ENCODE measurements at regions of chr11 and their contacts with region 1.

Region 1: GRCh38 chr11:128290106-128290840 is 297.1 kb downstream of the ETS1 start:
- DNase-seq: peak; percentile 80
- H3K4me3 Mint-ChIP-seq: peak overlapping the region; percentile 81
- H3K27ac Mint-ChIP-seq: peak overlapping the region; percentile 96
- H3K4me1 Mint-ChIP-seq: peaks cover 97% of the 10 kb centered on the region
- H3K27me3 Mint-ChIP-seq: no peaks in the 10 kb centered on the region

Region 2: GRCh38 chr11:127816962-127817361 is 473.3 kb before region 1 on chr11:
- CTCF ChIA-PET with region 1: no interaction called
- POLR2A ChIA-PET with region 1: no interaction called
- intact Hi-C with region 1: no loop called
- DNase-seq: no peak
- H3K4me3 Mint-ChIP-seq: no peak overlapping the region
- H3K27ac Mint-ChIP-seq: no peak overlapping the region
- H3K4me1 Mint-ChIP-seq: no peaks in the 10 kb centered on the region
- H3K27me3 Mint-ChIP-seq: peaks cover 7% of the 10 kb centered on the region

Region 3: GRCh38 chr11:128172046-128172878 is 118.0 kb before region 1 on chr11:
- CTCF ChIA-PET with region 1: interaction called, 29 read pairs
- POLR2A ChIA-PET with region 1: no interaction called
- intact Hi-C with region 1: loop called (anchors 1 kb)
- DNase-seq: peak; percentile 91
- H3K4me3 Mint-ChIP-seq: no peak overlapping the region
- H3K27ac Mint-ChIP-seq: peak overlapping the region; percentile 25
- H3K4me1 Mint-ChIP-seq: peaks cover 17% of the 10 kb centered on the region
- H3K27me3 Mint-ChIP-seq: no peaks in the 10 kb centered on the region

Region 4: GRCh38 chr11:128238521-128239265 is 51.6 kb before region 1 on chr11:
- CTCF ChIA-PET with region 1: interaction called, 6 read pairs
- POLR2A ChIA-PET with region 1: interaction called, 7 read pairs
- intact Hi-C with region 1: loop called (anchors 1 kb)
- DNase-seq: no peak
- H3K4me3 Mint-ChIP-seq: peak overlapping the region; percentile 45
- H3K27ac Mint-ChIP-seq: peak overlapping the region; percentile 75
- H3K4me1 Mint-ChIP-seq: peaks cover 27% of the 10 kb centered on the region
- H3K27me3 Mint-ChIP-seq: no peaks in the 10 kb centered on the region

Region 5: DNA sequence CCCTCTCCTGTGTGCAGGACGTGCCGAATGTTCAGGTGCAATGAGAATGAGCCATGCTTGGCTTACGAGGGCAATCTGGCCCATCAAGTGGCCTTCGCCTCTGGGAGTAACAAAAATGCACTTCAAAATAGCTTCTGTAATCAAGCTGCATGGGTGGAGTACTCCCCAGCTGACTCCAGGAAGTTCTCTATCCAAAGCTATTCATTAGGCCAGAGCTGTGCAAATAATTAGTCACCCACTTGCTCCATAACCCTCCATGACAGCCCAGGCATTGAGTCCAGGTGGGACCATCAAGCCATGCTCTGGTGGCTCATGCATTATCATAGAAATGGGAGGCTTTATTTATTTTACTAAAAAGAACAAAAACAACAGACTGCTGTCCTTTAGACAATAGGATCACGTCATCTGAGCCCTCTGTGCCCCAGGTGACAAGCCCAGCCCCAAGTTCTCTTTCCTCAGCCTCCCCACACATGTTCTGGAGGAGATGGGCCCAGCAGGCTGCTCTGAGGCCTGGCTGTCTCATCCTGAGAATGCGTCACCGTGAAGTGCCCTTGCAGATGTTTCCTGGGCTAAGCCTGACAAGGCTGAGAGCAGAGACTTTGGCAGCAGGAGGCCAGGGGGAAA is 52.4 kb after region 1 on chr11:
- CTCF ChIA-PET with region 1: interaction called, 9 read pairs
- POLR2A ChIA-PET with region 1: interaction called, 66 read pairs
- intact Hi-C with region 1: loop called (anchors 1 kb)
- DNase-seq: peak; percentile 93
- H3K4me3 Mint-ChIP-seq: peak overlapping the region; percentile 66
- H3K27ac Mint-ChIP-seq: peak overlapping the region; percentile 88
- H3K4me1 Mint-ChIP-seq: peaks cover 88% of the 10 kb centered on the region
- H3K27me3 Mint-ChIP-seq: no peaks in the 10 kb centered on the region

Region 6: GRCh38 chr11:128472128-128473089 is 182.1 kb after region 1 on chr11:
- CTCF ChIA-PET with region 1: interaction called, 26 read pairs
- POLR2A ChIA-PET with region 1: interaction called, 24 read pairs
- intact Hi-C with region 1: loop called (anchors 1 kb)
- DNase-seq: peak; percentile 83
- H3K4me3 Mint-ChIP-seq: peak overlapping the region; percentile 64
- H3K27ac Mint-ChIP-seq: peak overlapping the region; percentile 99
- H3K4me1 Mint-ChIP-seq: peaks cover 97% of the 10 kb centered on the region
- H3K27me3 Mint-ChIP-seq: no peaks in the 10 kb centered on the region

Region 7: DNA sequence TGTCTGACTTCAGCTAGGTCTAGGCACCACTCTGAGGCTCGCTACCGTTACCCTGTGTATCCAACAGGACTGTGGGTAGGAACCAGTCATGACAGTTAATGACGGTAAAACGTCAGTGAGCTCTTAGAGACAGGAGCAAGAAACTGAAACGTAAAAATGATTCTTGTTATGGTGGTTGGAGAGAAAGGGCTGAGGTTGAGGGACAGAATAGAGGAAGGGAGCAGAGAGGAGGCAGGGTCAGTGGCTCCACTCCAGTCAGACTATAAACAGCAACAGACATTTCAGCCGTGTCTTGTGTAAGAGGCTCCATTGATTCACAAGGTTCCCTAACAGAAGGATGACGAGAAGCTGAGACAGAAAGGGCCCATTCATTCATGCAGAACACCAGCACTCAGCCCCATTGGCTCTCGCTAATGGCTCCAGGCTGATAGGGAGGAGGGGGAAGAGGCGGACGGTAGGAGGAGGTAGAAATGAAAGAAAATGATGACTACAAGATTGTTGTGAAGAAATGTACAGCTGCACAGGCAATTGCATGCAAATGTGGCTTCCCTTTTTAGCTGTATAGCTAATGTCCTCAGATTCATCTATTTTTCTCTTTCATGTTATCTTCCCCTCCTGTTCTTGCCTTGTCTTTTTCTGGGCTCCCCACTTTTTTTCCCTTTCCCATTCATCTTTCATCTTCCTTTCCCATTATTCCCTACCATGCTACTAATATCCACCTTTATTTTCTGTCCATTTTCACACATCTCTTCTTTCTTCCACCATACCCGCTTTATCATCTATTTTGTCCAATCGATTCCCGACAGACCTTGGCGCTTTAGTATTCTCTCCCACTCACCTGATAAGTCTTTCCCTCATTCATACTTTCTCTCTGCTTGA is 262.7 kb after region 1 on chr11:
- CTCF ChIA-PET with region 1: no interaction called
- POLR2A ChIA-PET with region 1: interaction called, 8 read pairs
- intact Hi-C with region 1: loop called (anchors 1 kb)
- DNase-seq: peak; percentile 72
- H3K4me3 Mint-ChIP-seq: peak overlapping the region; percentile 70
- H3K27ac Mint-ChIP-seq: peak overlapping the region; percentile 94
- H3K4me1 Mint-ChIP-seq: peaks cover 65% of the 10 kb centered on the region
- H3K27me3 Mint-ChIP-seq: no peaks in the 10 kb centered on the region

Region 8: GRCh38 chr11:128757235-128757711 is 467.0 kb after region 1 on chr11:
- CTCF ChIA-PET with region 1: interaction called, 3 read pairs
- POLR2A ChIA-PET with region 1: no interaction called
- intact Hi-C with region 1: loop called (anchors 2 kb)
- DNase-seq: peak; percentile 84
- H3K4me3 Mint-ChIP-seq: peak overlapping the region; percentile 42
- H3K27ac Mint-ChIP-seq: peak overlapping the region; percentile 89
- H3K4me1 Mint-ChIP-seq: peaks cover 81% of the 10 kb centered on the region
- H3K27me3 Mint-ChIP-seq: no peaks in the 10 kb centered on the region

Measured in activated CD4-positive, alpha-beta memory T cell treated with anti-CD3 and anti-CD28 coated beads for 36 hours (primary cell).